ENCODE measurements at regions of chr1 and their contacts with region 1.

Region 1: GRCh38 chr1:230772457-230773395 is 25.5 kb downstream of the CAPN9 start:
- DNase-seq: peak; percentile 67 to 87 (median 82)
- ATAC-seq: peak; percentile 89 to 90
- H3K4me3 ChIP-seq: no peak overlapping the region
- H3K27ac ChIP-seq: peak overlapping the region; percentile 63
- H3K4me1 ChIP-seq: no peaks in the 10 kb centered on the region
- H3K27me3 ChIP-seq: no peaks in the 10 kb centered on the region

Region 2: GRCh38 chr1:230591683-230592082 is 181.0 kb before region 1 on chr1:
- intact Hi-C with region 1: no loop called
- DNase-seq: no peak
- ATAC-seq: no peak
- H3K4me3 ChIP-seq: no peak overlapping the region
- H3K27ac ChIP-seq: no peak overlapping the region
- H3K4me1 ChIP-seq: no peaks in the 10 kb centered on the region
- H3K27me3 ChIP-seq: no peaks in the 10 kb centered on the region

Region 3: DNA sequence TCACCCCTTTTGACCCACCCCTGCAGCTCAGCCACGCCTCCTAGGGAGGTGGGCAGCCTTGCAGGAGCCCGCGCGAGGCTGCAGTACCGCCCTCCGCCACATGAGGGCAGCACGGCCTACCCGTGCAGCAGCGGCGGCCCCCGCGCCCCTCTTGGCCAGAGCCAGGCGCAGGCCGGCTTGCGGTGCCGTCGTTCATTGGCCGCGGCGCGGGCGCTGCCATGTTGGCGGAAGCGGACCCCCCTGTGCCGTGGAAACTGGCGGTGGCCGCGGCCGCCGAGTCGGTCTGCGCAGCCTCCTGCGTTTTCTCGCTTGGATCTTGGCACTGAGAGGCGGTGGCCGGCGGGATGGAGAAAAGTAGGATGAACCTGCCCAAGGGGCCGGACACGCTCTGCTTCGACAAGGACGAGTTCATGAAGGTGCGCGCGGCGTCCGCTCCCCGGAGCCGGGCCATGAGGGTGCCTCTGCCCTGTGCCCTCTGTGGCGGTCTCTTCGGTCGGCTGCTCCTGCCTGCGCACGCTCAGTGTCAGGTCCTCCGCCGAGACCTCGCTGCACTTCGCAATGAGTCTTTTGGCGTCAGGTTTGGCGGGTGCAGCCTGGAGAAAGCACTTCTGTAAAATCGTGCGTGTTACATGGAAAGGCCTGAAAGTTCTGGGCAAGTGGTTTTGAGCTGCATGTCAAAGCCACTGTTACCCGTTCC is 130.3 kb before region 1 on chr1 and contains the start of gene COG2:
- intact Hi-C with region 1: loop called in 2 of 4 experiments (anchors 2 to 10 kb)
- DNase-seq: peak; percentile 95 to 99 (median 98)
- ATAC-seq: peak; percentile 99
- H3K4me3 ChIP-seq: peak within 1 kb of the TSS; percentile 70
- H3K27ac ChIP-seq: peak within 1 kb of the TSS; percentile 78
- H3K4me1 ChIP-seq: peaks cover 6% of the 10 kb centered on the region
- H3K27me3 ChIP-seq: no peaks in the 10 kb centered on the region
- total RNA-seq, gene COG2: 27.6 to 43.9 (median 41.2) TPM

Region 4: GRCh38 chr1:230696722-230697437 is 75.8 kb before region 1 on chr1:
- intact Hi-C with region 1: loop called in 2 of 4 experiments (anchors 10 kb)
- DNase-seq: no peak
- ATAC-seq: peak; percentile 46 to 62
- H3K4me3 ChIP-seq: no peak overlapping the region
- H3K27ac ChIP-seq: no peak overlapping the region
- H3K4me1 ChIP-seq: peaks cover 5% of the 10 kb centered on the region
- H3K27me3 ChIP-seq: no peaks in the 10 kb centered on the region

Region 5: GRCh38 chr1:230708631-230709580 is 63.8 kb before region 1 on chr1:
- intact Hi-C with region 1: loop called in 1 of 4 experiments (anchors 5 kb)
- DNase-seq: peak; percentile 50 to 72 (median 71)
- ATAC-seq: peak; percentile 50
- H3K4me3 ChIP-seq: no peak overlapping the region
- H3K27ac ChIP-seq: no peak overlapping the region
- H3K4me1 ChIP-seq: peaks cover 7% of the 10 kb centered on the region
- H3K27me3 ChIP-seq: no peaks in the 10 kb centered on the region

Region 6: GRCh38 chr1:230940848-230941247 is 168.1 kb after region 1 on chr1:
- intact Hi-C with region 1: no loop called
- DNase-seq: no peak
- ATAC-seq: no peak
- H3K4me3 ChIP-seq: no peak overlapping the region
- H3K27ac ChIP-seq: no peak overlapping the region
- H3K4me1 ChIP-seq: no peaks in the 10 kb centered on the region
- H3K27me3 ChIP-seq: no peaks in the 10 kb centered on the region

Region 7: DNA sequence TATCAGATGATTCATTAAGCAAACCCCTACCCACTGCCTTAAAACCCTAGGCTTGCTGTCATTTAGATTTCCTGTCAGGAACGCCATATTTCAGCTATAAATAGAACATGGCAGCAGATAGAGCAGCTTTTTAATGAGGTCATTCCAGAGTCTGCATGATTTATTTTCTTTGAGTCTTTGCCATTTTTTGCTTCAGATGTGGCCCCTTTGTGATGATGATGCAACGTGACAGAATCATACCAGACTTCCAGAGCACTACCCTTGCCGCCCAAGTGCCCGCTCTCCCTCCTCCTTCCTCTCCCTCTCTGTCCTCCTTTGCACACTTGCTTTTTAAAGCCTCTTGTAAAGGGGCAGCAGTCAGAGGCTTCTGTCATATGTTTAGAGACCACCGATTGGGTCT is 333.6 kb after region 1 on chr1:
- intact Hi-C with region 1: no loop called
- DNase-seq: no peak
- ATAC-seq: peak; percentile 31 to 79
- H3K4me3 ChIP-seq: peak overlapping the region; percentile 17
- H3K27ac ChIP-seq: no peak overlapping the region
- H3K4me1 ChIP-seq: peaks cover 4% of the 10 kb centered on the region
- H3K27me3 ChIP-seq: no peaks in the 10 kb centered on the region

Measured in right cardiac atrium (tissue), 5 donors.